A673 (cell line): ENCODE measurements at regions of chr6 and their contacts with region 1.

Region 1: DNA sequence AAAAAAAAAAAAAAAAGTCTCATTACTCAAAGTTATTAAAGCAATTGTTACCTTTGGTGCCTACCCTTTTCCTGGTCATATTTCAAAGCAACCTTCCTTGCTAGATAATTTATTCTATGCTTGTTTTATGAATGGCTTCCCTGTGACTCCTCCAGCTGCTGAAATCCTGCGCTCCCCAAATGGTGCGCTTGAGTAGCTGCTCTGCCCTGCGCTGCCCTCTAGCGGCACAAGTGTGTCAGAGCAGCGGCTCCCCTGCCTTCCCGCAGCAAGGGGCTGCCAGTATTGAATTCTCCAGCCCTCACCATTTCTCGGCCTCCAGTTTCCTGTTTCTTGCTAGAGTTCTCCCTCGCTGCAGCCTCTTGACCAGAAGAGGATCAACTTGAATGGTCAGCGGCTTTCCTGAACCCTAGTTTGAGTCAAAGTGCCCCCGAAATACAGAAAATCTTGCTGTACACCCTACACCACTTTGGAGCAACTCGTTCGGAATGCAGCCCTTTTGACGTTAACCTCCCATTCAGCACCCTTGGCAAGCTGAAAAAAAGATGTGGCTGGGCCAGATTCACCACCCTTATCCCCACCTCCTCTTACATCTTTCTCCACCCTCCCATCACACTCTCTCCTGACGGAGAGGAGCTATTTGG is 60.4 kb upstream of the KLHL31 start:
- DNase-seq: peak; percentile 85
- H3K4me3 ChIP-seq: no peak overlapping the region
- H3K27ac ChIP-seq: no peak overlapping the region
- H3K4me1 ChIP-seq: no peaks in the 10 kb centered on the region
- H3K27me3 ChIP-seq: no peaks in the 10 kb centered on the region
- CTCF ChIP-seq: peak; percentile 95

Region 2: DNA sequence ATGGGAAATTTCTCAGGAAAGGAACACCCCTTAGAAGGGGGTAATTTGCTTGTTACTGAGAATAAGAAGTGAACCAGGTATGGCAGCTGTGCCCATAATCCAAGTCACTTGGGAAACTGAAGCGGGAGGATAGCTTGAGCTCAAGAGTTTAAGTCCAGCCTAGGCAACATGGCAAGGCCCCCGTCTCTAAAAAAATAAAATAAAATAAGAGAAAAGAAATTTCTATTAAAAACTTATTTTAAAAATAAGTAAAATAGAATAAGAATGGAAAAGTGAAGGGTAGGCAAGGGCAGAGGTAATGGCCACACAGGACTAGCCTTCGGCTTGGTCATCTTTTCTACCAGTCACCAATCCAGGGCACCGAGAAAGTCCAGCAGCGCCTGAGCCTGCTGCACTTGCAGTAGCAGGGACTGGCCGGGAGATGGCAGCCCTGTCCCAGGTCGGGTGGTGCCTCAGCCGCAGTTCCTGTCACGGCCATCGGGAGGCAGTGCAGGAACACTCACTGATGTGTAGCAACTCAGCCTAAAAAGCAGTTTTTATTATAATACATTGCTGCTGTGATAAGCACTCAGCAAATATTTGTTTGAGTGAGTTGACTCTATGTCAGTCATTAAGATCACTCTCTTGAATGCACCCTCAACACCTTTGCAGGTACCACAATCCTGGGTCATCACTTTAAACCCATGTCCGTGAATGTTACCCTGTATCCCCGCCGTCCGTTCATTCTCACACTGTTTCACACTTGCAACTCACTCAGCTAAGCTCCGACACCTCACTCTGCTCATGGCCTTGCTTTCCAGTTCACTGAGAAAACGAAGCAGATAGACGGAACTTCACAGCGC is 554.1 kb before region 1 on chr6:
- CTCF ChIA-PET with region 1: interaction called, 3 read pairs
- POLR2A ChIA-PET with region 1: no interaction called
- intact Hi-C with region 1: loop called (anchors 5 kb)
- DNase-seq: peak; percentile 74
- H3K4me3 ChIP-seq: no peak overlapping the region
- H3K27ac ChIP-seq: no peak overlapping the region
- H3K4me1 ChIP-seq: no peaks in the 10 kb centered on the region
- H3K27me3 ChIP-seq: no peaks in the 10 kb centered on the region
- CTCF ChIP-seq: peak; percentile 100

Region 3: DNA sequence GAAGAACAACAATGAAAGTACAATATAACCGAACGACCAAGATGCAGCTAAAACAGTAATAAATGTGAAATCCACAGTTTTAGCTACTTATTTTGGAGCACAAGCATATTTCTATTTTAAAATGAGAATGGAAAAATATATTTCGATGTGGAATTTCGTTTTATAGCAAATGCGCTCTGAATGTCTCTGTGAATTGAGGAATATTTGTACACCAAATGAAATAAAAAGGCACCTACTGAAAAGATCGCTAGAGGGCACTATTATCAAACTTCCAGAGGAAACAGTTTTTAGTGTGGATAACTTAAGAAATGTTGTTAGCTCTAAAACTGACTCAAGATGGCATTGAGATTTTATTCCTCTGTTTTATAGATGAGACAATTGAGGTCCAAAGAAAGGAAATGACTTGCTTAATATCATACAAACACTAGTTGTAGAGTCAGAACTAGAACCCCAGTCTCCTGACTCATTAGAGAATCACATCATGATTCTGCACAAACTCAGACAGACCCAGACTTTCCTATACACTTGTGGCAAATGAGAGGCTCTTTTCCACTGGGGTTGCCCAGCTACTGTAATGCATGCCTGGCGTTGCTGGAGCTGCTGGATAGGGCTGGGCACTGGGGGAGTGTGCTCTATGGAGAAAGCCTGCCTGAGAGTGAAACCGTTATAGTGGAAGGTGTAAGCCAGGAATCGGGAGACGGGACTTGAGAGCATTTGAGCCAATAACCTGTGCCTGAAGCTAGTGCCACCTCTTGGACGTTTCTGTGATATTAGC is 232.9 kb before region 1 on chr6:
- CTCF ChIA-PET with region 1: interaction called, 25 read pairs
- POLR2A ChIA-PET with region 1: no interaction called
- intact Hi-C with region 1: loop called (anchors 1 kb)
- DNase-seq: peak; percentile 73
- H3K4me3 ChIP-seq: no peak overlapping the region
- H3K27ac ChIP-seq: no peak overlapping the region
- H3K4me1 ChIP-seq: no peaks in the 10 kb centered on the region
- H3K27me3 ChIP-seq: no peaks in the 10 kb centered on the region
- CTCF ChIP-seq: peak; percentile 74

Region 4: DNA sequence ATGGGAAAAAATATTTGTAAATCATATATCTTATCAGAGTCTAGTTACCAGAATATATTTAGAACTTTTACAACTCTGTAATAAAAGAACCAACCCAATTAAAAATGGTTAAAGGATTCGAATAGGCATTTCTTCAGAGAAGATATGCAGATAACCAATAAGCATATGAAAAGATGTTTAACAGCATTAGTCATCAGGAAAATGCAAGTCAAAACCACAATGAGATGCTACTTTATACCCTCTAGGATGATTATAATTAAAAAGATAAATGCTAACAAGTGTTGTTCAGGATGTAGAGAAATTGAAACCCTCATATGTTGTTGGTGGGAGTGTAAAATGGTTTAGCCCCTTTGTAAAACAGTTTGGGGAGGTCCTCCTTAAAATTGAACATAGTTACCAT is 163.0 kb after region 1 on chr6:
- CTCF ChIA-PET with region 1: interaction called, 14 read pairs
- POLR2A ChIA-PET with region 1: no interaction called
- intact Hi-C with region 1: no loop called
- DNase-seq: peak; percentile 12
- H3K4me3 ChIP-seq: no peak overlapping the region
- H3K27ac ChIP-seq: no peak overlapping the region
- H3K4me1 ChIP-seq: no peaks in the 10 kb centered on the region
- H3K27me3 ChIP-seq: no peaks in the 10 kb centered on the region
- CTCF ChIP-seq: no peak

Region 5: GRCh38 chr6:53956068-53956711 is 230.3 kb after region 1 on chr6:
- CTCF ChIA-PET with region 1: interaction called, 15 read pairs
- POLR2A ChIA-PET with region 1: no interaction called
- intact Hi-C with region 1: loop called (anchors 5 kb)
- DNase-seq: peak; percentile 83
- H3K4me3 ChIP-seq: no peak overlapping the region
- H3K27ac ChIP-seq: no peak overlapping the region
- H3K4me1 ChIP-seq: no peaks in the 10 kb centered on the region
- H3K27me3 ChIP-seq: peaks cover 5% of the 10 kb centered on the region
- CTCF ChIP-seq: peak; percentile 86